ENCODE measurements at regions of chr10 and their contacts with region 1.

Region 1: DNA sequence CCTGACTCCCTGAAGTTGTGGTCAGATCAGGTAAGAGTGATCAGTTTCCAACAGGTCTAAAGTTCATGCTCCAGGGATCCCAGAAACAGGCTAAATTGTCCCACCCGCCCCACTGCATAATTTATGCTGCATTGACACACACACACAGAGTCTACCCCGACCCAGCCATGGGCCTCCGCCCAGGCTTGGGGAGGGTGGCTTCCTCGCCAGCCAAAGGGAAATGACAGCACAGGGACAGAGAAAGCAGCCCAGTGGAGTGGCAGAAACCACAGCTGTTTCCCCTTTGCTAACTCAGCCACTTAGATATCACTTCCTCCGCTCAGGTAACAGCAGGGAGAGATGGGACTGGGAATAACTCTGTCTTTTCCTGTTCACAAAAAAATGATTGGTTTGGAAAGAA is 9.4 kb downstream of the SH3PXD2A start:
- DNase-seq: peak; percentile 51
- ATAC-seq: peak; percentile 82
- H3K4me3 Mint-ChIP-seq: no peak overlapping the region
- H3K27ac Mint-ChIP-seq: peak overlapping the region; percentile 18
- H3K4me1 Mint-ChIP-seq: peaks cover 17% of the 10 kb centered on the region
- H3K27me3 Mint-ChIP-seq: peaks cover 3% of the 10 kb centered on the region

Region 2: DNA sequence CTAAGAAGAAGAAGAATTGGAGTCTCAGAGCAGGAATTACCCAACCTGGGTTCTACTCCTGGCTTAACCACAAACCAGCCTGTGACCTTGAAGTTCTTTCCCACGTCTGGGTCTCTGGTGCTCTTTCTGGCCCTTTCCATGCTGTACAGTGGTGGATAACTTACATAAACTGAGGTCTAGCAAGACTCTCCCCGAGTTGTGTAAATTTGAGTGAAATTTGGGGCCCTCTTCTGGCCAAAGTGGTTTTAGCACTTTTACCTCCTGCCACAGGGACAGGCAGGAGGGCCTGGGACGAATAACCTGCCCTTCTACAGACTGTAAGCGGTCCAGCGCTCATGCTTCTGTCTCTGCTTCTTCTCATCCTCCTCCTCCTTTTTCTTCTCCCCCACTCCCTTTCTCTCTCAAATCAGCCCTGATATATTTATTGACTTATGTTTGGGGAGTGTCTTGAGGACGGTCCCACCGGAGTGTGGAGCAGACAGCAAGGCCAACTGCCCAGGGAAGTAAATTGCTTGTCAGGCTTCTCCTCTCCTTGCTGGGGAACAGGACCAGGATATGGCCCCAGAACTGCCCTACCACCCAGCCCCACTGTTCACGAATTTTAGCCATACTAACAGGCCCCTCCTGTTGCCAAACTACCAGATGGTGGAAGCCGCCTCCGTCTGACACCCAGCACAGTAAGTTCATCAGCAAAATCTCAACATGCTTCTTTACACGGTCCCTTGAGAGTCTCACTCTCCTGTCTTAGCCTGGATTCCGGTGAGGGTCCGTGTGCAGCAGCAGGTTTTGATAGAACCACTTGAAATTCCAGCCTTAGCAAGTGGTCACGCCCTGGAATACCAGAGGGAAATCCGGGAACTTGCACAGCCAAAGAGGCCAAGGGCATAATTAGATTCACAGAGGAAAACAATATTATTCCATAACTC is 13.5 kb after region 1 on chr10:
- CTCF ChIA-PET with region 1: interaction called, 12 read pairs
- POLR2A ChIA-PET with region 1: no interaction called
- intact Hi-C with region 1: no loop called
- DNase-seq: peak; percentile 75
- ATAC-seq: peak; percentile 77
- H3K4me3 Mint-ChIP-seq: no peak overlapping the region
- H3K27ac Mint-ChIP-seq: no peak overlapping the region
- H3K4me1 Mint-ChIP-seq: peaks cover 6% of the 10 kb centered on the region
- H3K27me3 Mint-ChIP-seq: peaks cover 18% of the 10 kb centered on the region

Measured in activated CD4-positive, alpha-beta T cell treated with anti-CD3 and anti-CD28 coated beads for 36 hours (primary cell).